ENCODE measurements at regions of chr14 and their contacts with region 1.

Region 1: GRCh38 chr14:96501742-96502617 is at the start of gene PAPOLA:
- DNase-seq: peak; percentile 96
- H3K4me3 ChIP-seq: peak within 1 kb of the TSS; percentile 99
- H3K27ac ChIP-seq: peak within 1 kb of the TSS; percentile 79
- H3K4me1 ChIP-seq: peaks cover 40% of the 10 kb centered on the region
- CTCF ChIP-seq: peak; percentile 41
- total RNA-seq, gene PAPOLA: 80.1 and 99.3 TPM in 2 replicates

Region 2: DNA sequence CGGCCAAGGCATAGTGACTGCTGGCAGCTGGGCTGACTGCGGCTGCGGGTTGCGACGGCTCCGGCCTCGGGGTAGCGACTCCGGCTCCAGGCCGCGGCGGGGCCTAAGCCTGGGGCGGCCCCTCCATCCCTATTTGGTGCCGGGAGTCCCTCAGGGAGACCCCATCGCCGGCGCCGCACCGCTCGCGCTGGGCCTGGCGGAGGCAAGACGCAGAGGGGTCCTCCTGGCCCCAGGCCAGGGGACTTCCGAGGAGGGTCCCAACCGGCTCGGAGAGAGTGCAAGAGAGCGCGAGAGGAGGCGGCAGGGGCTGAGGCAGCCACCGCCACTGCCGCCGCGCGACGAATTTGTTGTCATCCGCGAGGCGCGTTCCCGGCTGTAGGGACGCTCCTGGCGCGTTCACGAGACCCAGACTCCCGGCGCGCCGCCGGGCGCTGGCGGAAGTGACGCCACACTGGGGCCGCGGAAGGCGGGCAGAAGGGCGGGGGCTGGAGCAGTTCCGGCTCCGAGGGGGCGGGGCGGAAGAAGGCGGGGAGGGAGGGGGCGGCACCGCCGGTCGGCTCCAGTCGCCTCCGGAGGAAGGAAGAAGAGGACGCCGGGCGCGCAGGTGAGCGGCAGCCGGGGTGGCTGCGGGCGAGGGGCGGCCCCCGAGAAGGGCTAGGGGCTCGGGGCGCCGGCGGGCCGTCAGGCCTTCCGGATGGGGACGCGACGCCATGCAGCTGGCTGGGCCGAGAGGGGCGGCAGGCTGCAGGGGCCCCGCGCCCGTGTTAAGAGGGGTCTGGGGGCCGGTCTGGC is 138.8 kb before region 1 on chr14 and contains the starts of genes ATG2B and GSKIP:
- CTCF ChIA-PET with region 1: no interaction called
- POLR2A ChIA-PET with region 1: interaction called, 4 read pairs
- intact Hi-C with region 1: loop called (anchors 5 kb)
- DNase-seq: peak; percentile 98
- H3K4me3 ChIP-seq: peak within 1 kb of the TSS; percentile 93
- H3K27ac ChIP-seq: peak within 1 kb of the TSS; percentile 61
- H3K4me1 ChIP-seq: peaks cover 36% of the 10 kb centered on the region
- CTCF ChIP-seq: no peak
- total RNA-seq, gene ATG2B: 15.7 and 16.7 TPM in 2 replicates
- total RNA-seq, gene GSKIP: 7.7 and 12.5 TPM in 2 replicates

Region 3: DNA sequence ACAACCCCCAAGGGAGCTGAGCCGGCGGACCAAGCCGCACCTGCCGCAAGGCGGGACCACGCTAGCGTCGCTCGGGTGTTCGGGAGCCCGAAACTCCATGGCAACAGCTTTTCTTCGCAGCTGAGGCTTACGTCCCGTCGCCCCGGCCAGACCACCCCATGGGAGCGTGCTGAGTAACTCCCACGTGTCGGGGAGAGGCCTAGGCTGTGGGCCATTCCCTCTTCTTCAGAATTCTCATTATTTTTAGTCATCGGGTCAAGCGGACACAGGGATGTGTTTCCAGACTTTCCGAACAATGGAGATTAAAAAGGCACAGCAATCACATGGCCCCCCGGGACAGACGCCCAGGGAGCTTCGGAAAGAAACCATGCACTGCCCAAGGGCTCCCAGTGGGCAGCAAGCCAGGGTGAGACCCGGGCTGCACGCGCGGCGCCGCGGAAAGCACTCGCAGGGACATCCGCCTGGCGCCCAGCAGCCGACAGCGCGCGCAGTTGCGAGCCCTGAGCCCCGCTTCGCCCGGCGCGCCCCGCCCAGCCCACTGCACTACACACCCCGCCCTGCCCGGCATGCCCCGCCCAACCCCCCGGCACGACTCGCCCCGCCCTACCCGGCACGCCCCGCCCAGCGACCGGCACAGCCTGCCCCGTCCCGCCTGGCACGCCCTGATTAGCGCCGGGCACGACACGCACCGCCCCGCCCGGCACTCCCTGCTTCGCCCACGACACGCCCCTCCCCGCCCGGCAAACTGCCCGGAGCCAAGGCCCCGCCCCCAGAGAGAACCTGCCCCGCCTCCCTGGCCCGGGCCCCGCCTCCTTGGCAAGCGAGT is 110.5 kb before region 1 on chr14:
- CTCF ChIA-PET with region 1: no interaction called
- POLR2A ChIA-PET with region 1: no interaction called
- intact Hi-C with region 1: loop called (anchors 2 kb)
- DNase-seq: peak; percentile 94
- H3K4me3 ChIP-seq: peak overlapping the region; percentile 75
- H3K27ac ChIP-seq: peak overlapping the region; percentile 26
- H3K4me1 ChIP-seq: peaks cover 16% of the 10 kb centered on the region
- CTCF ChIP-seq: no peak

Region 4: GRCh38 chr14:96422992-96423391 is 79.0 kb before region 1 on chr14:
- CTCF ChIA-PET with region 1: no interaction called
- POLR2A ChIA-PET with region 1: no interaction called
- intact Hi-C with region 1: no loop called
- DNase-seq: no peak
- H3K4me3 ChIP-seq: no peak overlapping the region
- H3K27ac ChIP-seq: no peak overlapping the region
- H3K4me1 ChIP-seq: peaks cover 5% of the 10 kb centered on the region
- CTCF ChIP-seq: no peak

Region 5: DNA sequence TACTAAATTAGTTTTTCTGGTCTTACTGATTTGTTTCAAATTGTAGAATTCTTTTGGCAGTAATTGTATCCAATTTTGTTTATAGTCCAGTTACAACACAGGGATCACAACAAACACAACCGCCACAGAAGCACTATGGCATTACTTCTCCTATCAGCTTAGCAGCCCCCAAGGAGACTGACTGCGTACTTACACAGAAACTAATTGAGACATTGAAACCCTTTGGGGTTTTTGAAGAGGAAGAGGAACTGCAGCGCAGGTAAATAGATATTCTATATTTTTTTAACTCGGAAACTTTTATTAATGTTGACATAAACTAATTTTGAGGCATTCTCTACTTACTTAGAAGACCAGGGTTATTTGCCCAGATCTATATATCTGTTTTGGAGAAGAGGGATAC is 18.0 kb after region 1 on chr14:
- CTCF ChIA-PET with region 1: no interaction called
- POLR2A ChIA-PET with region 1: interaction called, 13 read pairs
- intact Hi-C with region 1: no loop called
- DNase-seq: no peak
- H3K4me3 ChIP-seq: no peak overlapping the region
- H3K27ac ChIP-seq: no peak overlapping the region
- H3K4me1 ChIP-seq: peaks cover 26% of the 10 kb centered on the region
- CTCF ChIP-seq: no peak

Measured in OCI-LY7 (cell line).